AG04449 (cell line): ENCODE measurements at regions of chr4 and their contacts with region 1.

Region 1: DNA sequence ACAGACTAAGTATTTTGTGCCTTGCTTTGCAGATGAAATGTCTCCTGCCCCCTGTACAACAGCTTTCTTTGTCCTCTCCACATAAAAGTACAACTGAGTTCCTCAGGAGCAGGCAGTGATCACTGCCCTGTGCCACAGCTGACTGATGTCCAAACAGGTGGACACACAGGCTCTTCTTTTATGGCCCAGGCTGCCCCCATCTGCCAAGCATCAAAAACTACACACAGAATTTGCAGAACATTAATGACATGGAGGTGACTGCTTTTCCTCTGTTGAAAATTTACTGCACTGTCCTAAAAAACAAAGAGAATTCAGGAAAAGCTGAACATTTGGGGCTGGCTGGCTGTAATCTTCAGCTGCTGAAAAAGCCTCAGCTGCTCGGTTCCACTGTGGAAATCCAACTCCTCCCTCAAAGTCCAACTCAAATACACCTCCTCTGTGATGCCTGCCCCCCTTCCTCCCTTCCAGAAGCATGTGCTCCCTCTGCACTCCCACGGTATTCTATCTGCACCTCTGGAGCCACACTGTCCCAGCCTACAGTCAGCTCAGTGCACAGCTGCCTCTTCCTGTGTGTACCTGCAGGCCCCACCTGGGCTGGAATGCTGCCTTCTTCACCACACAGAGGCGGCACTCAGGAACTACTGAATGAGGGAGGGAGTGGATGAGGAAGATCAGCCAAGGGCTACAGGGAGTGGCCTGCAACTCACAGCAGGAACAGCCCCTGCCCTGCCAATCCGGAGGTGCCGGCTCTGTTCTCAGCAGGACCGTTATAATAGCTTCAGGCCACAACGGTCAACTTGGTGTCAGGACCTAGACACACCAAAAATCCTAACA is 10.3 kb downstream of the AFAP1 start:
- DNase-seq: no peak
- H3K4me3 ChIP-seq: no peak overlapping the region
- CTCF ChIP-seq: no peak

Region 2: GRCh38 chr4:7939377-7940108 is 10.2 kb after region 1 on chr4 and contains the start of gene AFAP1:
- CTCF ChIA-PET with region 1: interaction called, 12 read pairs
- POLR2A ChIA-PET with region 1: interaction called, 4 read pairs
- DNase-seq: no peak
- H3K4me3 ChIP-seq: peak within 1 kb of the TSS; percentile 78
- CTCF ChIP-seq: no peak

Region 3: GRCh38 chr4:8247047-8247930 is 318.0 kb after region 1 on chr4:
- CTCF ChIA-PET with region 1: no interaction called
- POLR2A ChIA-PET with region 1: no interaction called
- DNase-seq: no peak
- H3K4me3 ChIP-seq: no peak overlapping the region
- CTCF ChIP-seq: no peak